GM10248 (cell line): ENCODE measurements at regions of chr4 and their contacts with region 1.

Region 1: DNA sequence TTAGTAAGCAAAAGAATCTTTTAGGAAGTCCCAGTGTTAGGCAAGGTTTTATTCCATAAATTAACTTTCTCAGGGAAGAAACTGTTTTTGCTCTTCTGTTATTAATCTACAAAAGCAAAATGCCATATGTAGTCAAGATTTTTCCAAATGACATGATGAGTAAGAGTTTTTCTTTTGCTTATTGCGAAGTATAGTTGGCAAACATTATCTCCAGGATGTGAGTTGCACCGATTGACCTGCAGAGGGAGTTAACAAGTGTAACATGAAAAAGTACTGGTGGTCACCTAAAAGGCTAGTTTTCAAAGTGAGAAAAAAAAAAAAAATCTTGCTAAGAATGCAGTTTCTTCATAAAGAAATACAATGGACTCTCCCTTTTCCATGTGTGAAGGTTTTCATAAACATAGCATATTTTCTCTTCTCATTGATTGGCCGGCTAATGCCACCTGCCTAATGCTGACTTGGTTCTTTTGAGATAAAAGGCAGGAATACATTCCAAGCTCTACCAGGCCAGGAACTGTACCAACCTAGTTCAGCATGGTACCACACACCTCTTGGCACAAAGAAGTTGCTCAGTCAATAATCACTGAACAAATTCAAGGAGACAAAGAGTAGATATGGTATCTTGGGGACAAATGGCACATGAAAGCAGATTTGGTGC is 100.2 kb downstream of the LNX1 start:
- DNase-seq: peak; percentile 24
- CTCF ChIP-seq: peak; percentile 35

Region 2: GRCh38 chr4:53478671-53479456 is 12.2 kb before region 1 on chr4:
- CTCF ChIA-PET with region 1: interaction called, 14 read pairs
- POLR2A ChIA-PET with region 1: no interaction called
- DNase-seq: no peak
- CTCF ChIP-seq: no peak

Region 3: GRCh38 chr4:53563824-53564223 is 72.7 kb after region 1 on chr4:
- CTCF ChIA-PET with region 1: no interaction called
- POLR2A ChIA-PET with region 1: no interaction called
- DNase-seq: peak; percentile 59
- CTCF ChIP-seq: no peak